GM12878 (cell line): ENCODE measurements at regions of chr2 and their contacts with region 1.

Region 1: DNA sequence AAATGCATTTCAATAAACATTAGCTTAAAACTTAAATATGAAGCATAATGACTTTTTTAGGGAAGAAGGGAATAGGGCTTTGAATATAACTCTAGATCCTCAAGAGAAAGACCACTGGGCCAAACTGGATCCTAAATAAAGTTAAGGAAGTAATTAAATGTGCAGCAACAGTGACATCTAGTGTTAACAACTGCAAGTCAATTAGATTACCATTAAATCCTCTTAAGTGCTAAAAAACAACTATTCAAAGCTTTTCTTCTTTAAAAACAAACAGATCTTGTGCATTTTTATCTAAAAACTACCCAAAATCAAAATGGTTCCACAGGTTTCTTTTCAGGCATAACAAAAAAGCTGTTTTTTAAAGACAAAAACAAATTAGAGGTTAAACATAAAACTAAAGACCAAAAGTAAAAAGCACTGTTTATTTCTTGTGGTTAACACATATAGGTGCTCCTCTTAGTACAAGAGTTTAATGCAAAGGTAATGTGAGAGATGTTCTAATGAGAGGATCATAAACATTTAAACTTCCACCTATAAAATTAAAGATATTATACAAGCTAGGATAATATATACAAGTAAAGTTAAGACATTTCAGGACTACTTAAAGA is 111.4 kb downstream of the THADA start:
- DNase-seq: no peak
- ATAC-seq: peak; percentile 34
- H3K4me3 ChIP-seq: no peak overlapping the region
- H3K27ac ChIP-seq: no peak overlapping the region
- H3K4me1 ChIP-seq: peaks cover 22% of the 10 kb centered on the region
- H3K27me3 ChIP-seq: no peaks in the 10 kb centered on the region
- CTCF ChIP-seq: peak in 2 of 3 experiments; percentile 59 to 73; a peak in 5 of 6 replicates
- EP300 ChIP-seq: no peak
- POLR2A ChIP-seq: no peak
- RAD21 ChIP-seq: peak; percentile 76

Region 2: GRCh38 chr2:42954227-42954962 is 530.0 kb before region 1 on chr2:
- CTCF ChIA-PET with region 1: interaction called, 16 read pairs
- POLR2A ChIA-PET with region 1: no interaction called
- RAD21 ChIA-PET with region 1: no interaction called
- SMC1A ChIA-PET with region 1: interaction called, 5 read pairs
- in situ Hi-C with region 1: loop called (anchors 5 kb)
- intact Hi-C with region 1: no loop called
- DNase-seq: no peak
- ATAC-seq: no peak
- H3K4me3 ChIP-seq: no peak overlapping the region
- H3K27ac ChIP-seq: no peak overlapping the region
- H3K4me1 ChIP-seq: no peaks in the 10 kb centered on the region
- H3K27me3 ChIP-seq: no peaks in the 10 kb centered on the region; a peak in 1 of 4 replicates
- CTCF ChIP-seq: no peak
- EP300 ChIP-seq: no peak
- POLR2A ChIP-seq: no peak
- RAD21 ChIP-seq: no peak

Region 3: GRCh38 chr2:43097644-43098408 is 386.6 kb before region 1 on chr2:
- CTCF ChIA-PET with region 1: no interaction called
- POLR2A ChIA-PET with region 1: no interaction called
- RAD21 ChIA-PET with region 1: no interaction called
- SMC1A ChIA-PET with region 1: no interaction called
- in situ Hi-C with region 1: no loop called
- intact Hi-C with region 1: no loop called
- DNase-seq: no peak
- ATAC-seq: no peak
- H3K4me3 ChIP-seq: no peak overlapping the region
- H3K27ac ChIP-seq: no peak overlapping the region
- H3K4me1 ChIP-seq: no peaks in the 10 kb centered on the region
- H3K27me3 ChIP-seq: no peaks in the 10 kb centered on the region
- CTCF ChIP-seq: no peak
- EP300 ChIP-seq: no peak
- POLR2A ChIP-seq: no peak
- RAD21 ChIP-seq: no peak

Region 4: GRCh38 chr2:43169987-43170386 is 314.4 kb before region 1 on chr2:
- CTCF ChIA-PET with region 1: interaction called, 20 read pairs
- POLR2A ChIA-PET with region 1: no interaction called
- RAD21 ChIA-PET with region 1: interaction called, 6 read pairs
- SMC1A ChIA-PET with region 1: interaction called, 7 read pairs
- in situ Hi-C with region 1: no loop called
- intact Hi-C with region 1: no loop called
- DNase-seq: no peak
- ATAC-seq: peak; percentile 47
- H3K4me3 ChIP-seq: no peak overlapping the region
- H3K27ac ChIP-seq: no peak overlapping the region
- H3K4me1 ChIP-seq: peaks cover 35% of the 10 kb centered on the region
- H3K27me3 ChIP-seq: no peaks in the 10 kb centered on the region; a peak in 1 of 4 replicates
- CTCF ChIP-seq: peak; percentile 64 to 82 (median 81)
- EP300 ChIP-seq: no peak
- POLR2A ChIP-seq: no peak
- RAD21 ChIP-seq: peak; percentile 62

Region 5: DNA sequence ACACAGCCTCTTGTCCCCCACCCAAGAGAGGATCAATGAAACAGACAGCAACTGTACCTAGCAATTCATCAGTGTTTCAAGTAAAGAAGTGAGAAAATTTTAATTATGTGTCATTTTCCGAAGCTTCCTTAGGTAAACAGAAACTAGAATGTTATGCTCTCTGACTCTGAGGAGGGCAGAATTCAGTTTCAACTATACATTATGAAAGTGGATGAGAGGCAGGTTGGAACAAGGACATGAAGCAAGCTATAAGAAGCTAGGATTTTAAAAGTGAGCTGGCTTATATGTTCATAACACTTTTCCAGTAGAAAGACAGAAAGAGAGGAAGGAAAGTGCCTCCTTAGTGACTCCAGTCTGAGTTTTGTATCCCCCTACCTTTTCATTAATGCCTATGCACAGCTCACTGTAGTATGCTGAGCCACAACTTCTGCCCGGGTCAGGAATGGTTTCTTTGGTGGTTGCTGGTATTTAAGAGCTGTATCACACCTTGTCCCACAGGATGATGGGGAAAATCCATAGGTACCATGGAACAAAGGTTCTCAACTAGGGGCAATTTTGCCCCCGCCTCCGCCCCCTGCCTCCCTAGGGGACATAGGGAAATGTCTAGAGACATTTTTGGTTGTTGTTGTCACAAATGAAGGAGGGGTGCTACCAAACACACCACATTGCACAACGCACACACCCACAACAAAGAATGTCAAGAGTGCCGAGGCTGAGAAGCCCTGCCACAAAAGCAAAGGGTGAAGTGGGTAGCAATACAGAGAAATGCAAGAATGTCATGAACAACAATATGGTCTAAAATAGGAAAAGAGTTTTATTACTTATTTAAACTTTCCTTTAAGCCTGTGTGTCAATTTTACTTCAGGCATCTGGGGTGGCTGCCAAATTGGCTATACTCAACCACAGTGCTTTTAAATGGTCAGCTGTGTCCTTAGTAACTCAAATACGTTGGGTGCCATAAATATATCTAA is 97.0 kb before region 1 on chr2:
- CTCF ChIA-PET with region 1: interaction called, 13 read pairs
- POLR2A ChIA-PET with region 1: interaction called, 7 read pairs
- RAD21 ChIA-PET with region 1: interaction called, 63 read pairs
- SMC1A ChIA-PET with region 1: interaction called, 54 read pairs
- in situ Hi-C with region 1: no loop called
- intact Hi-C with region 1: loop called (anchors 2 kb)
- DNase-seq: peak; percentile 86
- ATAC-seq: peak; percentile 84
- H3K4me3 ChIP-seq: peak overlapping the region; percentile 56
- H3K27ac ChIP-seq: peak overlapping the region; percentile 99
- H3K4me1 ChIP-seq: peaks cover 53% of the 10 kb centered on the region
- H3K27me3 ChIP-seq: no peaks in the 10 kb centered on the region
- CTCF ChIP-seq: no peak
- EP300 ChIP-seq: peak; percentile 81 to 92; a peak in 3 of 4 replicates
- POLR2A ChIP-seq: no peak
- RAD21 ChIP-seq: no peak

Region 6: GRCh38 chr2:43461453-43462073 is 22.9 kb before region 1 on chr2:
- CTCF ChIA-PET with region 1: interaction called, 26 read pairs
- POLR2A ChIA-PET with region 1: interaction called, 11 read pairs
- RAD21 ChIA-PET with region 1: interaction called, 64 read pairs
- SMC1A ChIA-PET with region 1: interaction called, 84 read pairs
- in situ Hi-C with region 1: no loop called
- intact Hi-C with region 1: loop called (anchors 2 kb)
- DNase-seq: peak; percentile 81
- ATAC-seq: peak; percentile 97
- H3K4me3 ChIP-seq: peak overlapping the region; percentile 12; the same call in 1 of the 2 replicates
- H3K27ac ChIP-seq: peak overlapping the region; percentile 76
- H3K4me1 ChIP-seq: peaks cover 40% of the 10 kb centered on the region
- H3K27me3 ChIP-seq: no peaks in the 10 kb centered on the region
- CTCF ChIP-seq: no peak
- EP300 ChIP-seq: peak; percentile 53 to 62; a peak in 2 of 4 replicates
- POLR2A ChIP-seq: peak; percentile 54
- RAD21 ChIP-seq: peak; percentile 24; the same call in 1 of the 2 replicates

Region 7: GRCh38 chr2:43569921-43570320 is 85.5 kb after region 1 on chr2:
- CTCF ChIA-PET with region 1: interaction called, 8 read pairs
- POLR2A ChIA-PET with region 1: no interaction called
- RAD21 ChIA-PET with region 1: interaction called, 11 read pairs
- SMC1A ChIA-PET with region 1: interaction called, 4 read pairs
- in situ Hi-C with region 1: no loop called
- intact Hi-C with region 1: no loop called
- DNase-seq: peak; percentile 57
- ATAC-seq: peak; percentile 93
- H3K4me3 ChIP-seq: no peak overlapping the region
- H3K27ac ChIP-seq: peak overlapping the region; percentile 50
- H3K4me1 ChIP-seq: peaks cover 24% of the 10 kb centered on the region
- H3K27me3 ChIP-seq: no peaks in the 10 kb centered on the region
- CTCF ChIP-seq: no peak
- EP300 ChIP-seq: peak; percentile 79 to 90; a peak in 2 of 4 replicates
- POLR2A ChIP-seq: no peak
- RAD21 ChIP-seq: no peak

Region 8: GRCh38 chr2:43676322-43677050 is 192.1 kb after region 1 on chr2 and contains the start of gene C1GALT1C1L:
- CTCF ChIA-PET with region 1: no interaction called
- POLR2A ChIA-PET with region 1: no interaction called
- RAD21 ChIA-PET with region 1: no interaction called
- SMC1A ChIA-PET with region 1: no interaction called
- in situ Hi-C with region 1: no loop called
- intact Hi-C with region 1: no loop called
- DNase-seq: no peak
- ATAC-seq: no peak; the same call in 2 of the 3 replicates
- H3K4me3 ChIP-seq: no peak within 1 kb of the TSS
- H3K27ac ChIP-seq: no peak within 1 kb of the TSS
- H3K4me1 ChIP-seq: no peaks in the 10 kb centered on the region
- H3K27me3 ChIP-seq: no peaks in the 10 kb centered on the region; a peak in 1 of 4 replicates
- CTCF ChIP-seq: no peak
- EP300 ChIP-seq: no peak
- POLR2A ChIP-seq: no peak
- RAD21 ChIP-seq: no peak
- polyA plus RNA-seq, gene C1GALT1C1L: not detected

Region 9: DNA sequence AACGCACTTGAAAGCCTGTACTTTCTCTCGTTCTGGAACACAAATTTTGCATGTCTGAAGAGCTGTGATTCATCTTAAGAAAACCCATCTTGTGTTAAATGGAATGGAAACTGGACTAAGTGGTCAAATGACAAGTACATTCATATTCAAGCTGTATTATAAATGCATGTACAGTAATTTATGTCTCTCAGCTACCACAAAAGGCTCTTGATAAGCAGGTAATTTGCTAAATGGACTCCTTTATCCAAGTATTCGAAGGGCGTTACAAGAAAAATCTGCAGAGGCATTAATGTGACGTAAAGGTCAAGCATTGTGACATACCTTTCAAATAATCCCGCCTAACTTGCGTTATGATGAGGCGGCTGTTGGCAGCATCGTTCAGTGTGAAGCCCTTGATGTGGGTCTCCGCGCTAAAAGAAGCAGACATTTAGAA is 421.0 kb after region 1 on chr2:
- CTCF ChIA-PET with region 1: no interaction called
- POLR2A ChIA-PET with region 1: no interaction called
- RAD21 ChIA-PET with region 1: no interaction called
- SMC1A ChIA-PET with region 1: no interaction called
- in situ Hi-C with region 1: no loop called
- intact Hi-C with region 1: no loop called
- DNase-seq: peak; percentile 23
- ATAC-seq: peak; percentile 55
- H3K4me3 ChIP-seq: no peak overlapping the region
- H3K27ac ChIP-seq: no peak overlapping the region
- H3K4me1 ChIP-seq: no peaks in the 10 kb centered on the region
- H3K27me3 ChIP-seq: no peaks in the 10 kb centered on the region
- CTCF ChIP-seq: no peak
- EP300 ChIP-seq: peak in 1 of 2 experiments; percentile 31; a peak in 1 of 4 replicates
- POLR2A ChIP-seq: no peak
- RAD21 ChIP-seq: no peak